WTC11 (cell line): ENCODE measurements at regions of chr3 and their contacts with region 1.

Region 1: DNA sequence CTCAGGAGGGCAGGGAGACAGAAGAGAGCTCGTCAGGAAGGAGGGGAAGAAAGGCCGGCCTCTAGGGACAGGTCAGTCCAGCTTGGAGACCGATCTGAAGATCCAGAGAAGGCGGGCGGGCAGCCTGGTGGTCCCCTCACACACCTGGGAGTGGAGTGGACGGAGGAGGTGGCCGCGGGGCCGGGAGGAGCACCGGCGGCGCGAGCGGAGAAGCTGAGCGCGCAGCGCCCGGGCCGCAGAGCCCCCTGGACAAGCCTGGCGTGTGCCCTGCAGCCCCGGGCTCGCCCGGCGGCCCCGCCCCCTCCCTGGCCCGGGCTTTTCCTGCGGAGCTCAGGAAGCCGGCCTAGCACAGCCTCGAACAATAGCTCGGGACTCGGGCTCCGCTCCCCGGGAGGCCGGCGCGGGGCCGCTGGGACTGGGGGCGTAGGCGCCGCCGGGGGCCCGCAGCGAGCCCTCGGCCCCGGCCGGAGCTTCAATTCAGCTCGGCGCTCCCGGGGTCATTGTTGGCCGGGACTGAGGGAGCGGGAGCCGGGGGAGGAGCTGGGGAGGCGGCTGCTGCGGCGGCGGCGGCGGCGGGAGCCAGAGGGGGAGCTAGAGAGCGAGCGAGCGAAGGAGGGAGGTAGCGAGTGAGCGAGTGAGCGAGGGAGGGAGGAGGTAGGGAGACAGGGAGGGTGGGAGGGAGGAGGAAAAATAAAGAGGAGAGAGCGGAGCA is 40.9 kb upstream of the ROPN1 start:
- DNase-seq: peak; percentile 93
- ATAC-seq: peak; percentile 85
- H3K4me3 Mint-ChIP-seq: peak overlapping the region; percentile 90
- H3K27ac Mint-ChIP-seq: 0 out of 2 replicates have a peak overlapping the region, but pooled peaks have one; percentile 10
- H3K4me1 Mint-ChIP-seq: peaks cover 13% of the 10 kb centered on the region
- H3K27me3 Mint-ChIP-seq: peaks cover 27% of the 10 kb centered on the region
- CTCF ChIP-seq: peak; percentile 64

Region 2: DNA sequence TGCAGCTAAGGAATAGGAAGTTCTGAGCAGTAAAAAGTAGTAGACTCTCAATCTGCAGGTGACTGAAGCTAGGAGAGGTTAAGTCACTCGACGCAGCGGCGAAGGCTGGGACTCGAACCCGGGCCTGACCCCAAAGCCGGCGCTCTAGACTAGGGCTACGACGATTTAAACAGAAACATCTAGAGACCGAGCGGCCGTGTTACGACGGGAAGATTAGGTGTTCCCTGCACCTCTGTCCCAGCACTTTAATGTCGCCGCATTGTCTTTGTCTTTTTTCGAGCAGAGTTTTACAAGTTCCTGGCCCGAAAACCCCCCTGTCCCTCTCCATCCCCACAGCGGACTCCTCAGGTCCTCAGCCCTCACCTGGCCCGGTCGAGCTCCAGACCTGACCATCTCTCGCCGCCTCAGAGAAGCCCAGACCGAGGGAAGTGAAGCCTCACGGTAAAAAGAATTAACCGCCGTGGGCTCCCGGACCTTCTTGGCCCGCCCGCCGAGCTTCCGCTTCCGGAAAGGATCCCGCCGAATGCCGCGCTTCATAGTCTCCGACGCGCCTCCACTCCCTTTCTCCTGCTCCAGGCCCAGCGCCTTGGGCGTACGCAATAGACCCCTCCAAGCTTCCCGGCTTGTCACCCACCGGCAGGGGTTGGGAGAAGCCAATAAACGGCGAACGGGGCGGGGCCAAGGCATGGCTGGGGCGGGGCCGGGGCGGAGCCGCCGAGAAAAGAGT is 71.9 kb before region 1 on chr3 and contains the start of gene CCDC14:
- CTCF ChIA-PET with region 1: interaction called, 3 read pairs
- POLR2A ChIA-PET with region 1: interaction called, 10 read pairs
- DNase-seq: peak; percentile 98
- ATAC-seq: peak; percentile 100
- H3K4me3 Mint-ChIP-seq: peak within 1 kb of the TSS; percentile 93
- H3K27ac Mint-ChIP-seq: peak within 1 kb of the TSS; percentile 92
- H3K4me1 Mint-ChIP-seq: peaks cover 16% of the 10 kb centered on the region
- H3K27me3 Mint-ChIP-seq: peaks cover 38% of the 10 kb centered on the region
- CTCF ChIP-seq: no peak
- total RNA-seq, gene CCDC14: 52.4 to 67.0 TPM (median 64.1 TPM) in 3 replicates

Region 3: GRCh38 chr3:124057420-124057819 is 24.6 kb after region 1 on chr3:
- CTCF ChIA-PET with region 1: interaction called, 28 read pairs
- POLR2A ChIA-PET with region 1: interaction called, 3 read pairs
- DNase-seq: no peak
- ATAC-seq: no peak
- H3K4me3 Mint-ChIP-seq: no peak overlapping the region
- H3K27ac Mint-ChIP-seq: no peak overlapping the region
- H3K4me1 Mint-ChIP-seq: peaks cover 6% of the 10 kb centered on the region
- H3K27me3 Mint-ChIP-seq: peaks cover 7% of the 10 kb centered on the region
- CTCF ChIP-seq: no peak

Region 4: DNA sequence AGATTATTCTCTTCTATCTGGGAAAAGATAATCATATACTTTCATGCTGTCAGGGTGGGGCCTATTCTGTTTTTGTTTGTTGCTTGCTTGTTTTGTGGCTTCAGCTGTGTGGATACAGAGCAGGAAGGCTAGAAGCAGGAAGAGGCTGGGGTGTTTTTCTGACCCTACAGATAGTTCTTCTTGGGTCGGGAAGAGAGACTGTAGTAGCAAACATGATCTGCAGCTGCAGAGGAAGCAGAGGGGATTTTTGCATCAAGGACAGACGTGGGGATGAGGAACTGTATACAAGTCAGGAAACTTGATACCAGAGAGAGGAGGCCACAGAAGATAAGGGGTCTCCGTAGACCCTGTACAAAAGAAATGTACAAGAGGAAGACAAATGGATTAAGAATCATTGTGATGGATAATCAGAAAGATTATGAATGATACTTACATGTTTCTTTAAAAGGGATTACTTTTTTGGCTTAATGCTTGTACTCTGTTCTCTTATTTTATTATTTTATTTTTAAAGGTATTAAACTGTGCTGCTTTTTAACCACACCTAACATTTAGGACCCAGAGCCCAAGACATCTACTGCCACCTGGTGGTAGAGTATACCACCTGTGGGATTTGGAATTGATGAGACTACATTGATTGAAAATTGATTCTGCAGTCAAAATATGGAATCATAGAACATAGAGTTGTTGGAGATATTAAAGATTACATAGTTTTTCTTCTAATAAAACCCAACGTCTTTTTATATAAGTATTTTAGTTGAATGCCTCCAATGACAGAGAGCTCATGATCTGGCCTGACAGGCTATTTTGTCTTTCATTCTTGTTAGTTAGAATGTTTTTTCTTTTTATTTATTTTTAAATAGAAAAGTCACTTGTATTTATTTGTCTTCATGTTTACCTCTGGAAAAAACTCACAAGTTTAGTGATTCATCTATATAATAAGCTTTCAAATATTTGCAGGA is 46.4 kb after region 1 on chr3:
- CTCF ChIA-PET with region 1: interaction called, 30 read pairs
- POLR2A ChIA-PET with region 1: no interaction called
- DNase-seq: no peak
- ATAC-seq: 0 out of 2 replicates have a peak, but pooled peaks have one; percentile 43
- H3K4me3 Mint-ChIP-seq: no peak overlapping the region
- H3K27ac Mint-ChIP-seq: no peak overlapping the region
- H3K4me1 Mint-ChIP-seq: peaks cover 20% of the 10 kb centered on the region
- H3K27me3 Mint-ChIP-seq: no peaks in the 10 kb centered on the region
- CTCF ChIP-seq: peak; percentile 39; the same call in 1 of the 2 replicates

Region 5: GRCh38 chr3:124246949-124247348 is 214.1 kb after region 1 on chr3:
- CTCF ChIA-PET with region 1: interaction called, 15 read pairs
- POLR2A ChIA-PET with region 1: no interaction called
- DNase-seq: peak; percentile 21
- ATAC-seq: peak; percentile 69
- H3K4me3 Mint-ChIP-seq: no peak overlapping the region
- H3K27ac Mint-ChIP-seq: no peak overlapping the region
- H3K4me1 Mint-ChIP-seq: peaks cover 12% of the 10 kb centered on the region
- H3K27me3 Mint-ChIP-seq: no peaks in the 10 kb centered on the region; the same call in 1 of the 2 replicates
- CTCF ChIP-seq: no peak

Region 6: DNA sequence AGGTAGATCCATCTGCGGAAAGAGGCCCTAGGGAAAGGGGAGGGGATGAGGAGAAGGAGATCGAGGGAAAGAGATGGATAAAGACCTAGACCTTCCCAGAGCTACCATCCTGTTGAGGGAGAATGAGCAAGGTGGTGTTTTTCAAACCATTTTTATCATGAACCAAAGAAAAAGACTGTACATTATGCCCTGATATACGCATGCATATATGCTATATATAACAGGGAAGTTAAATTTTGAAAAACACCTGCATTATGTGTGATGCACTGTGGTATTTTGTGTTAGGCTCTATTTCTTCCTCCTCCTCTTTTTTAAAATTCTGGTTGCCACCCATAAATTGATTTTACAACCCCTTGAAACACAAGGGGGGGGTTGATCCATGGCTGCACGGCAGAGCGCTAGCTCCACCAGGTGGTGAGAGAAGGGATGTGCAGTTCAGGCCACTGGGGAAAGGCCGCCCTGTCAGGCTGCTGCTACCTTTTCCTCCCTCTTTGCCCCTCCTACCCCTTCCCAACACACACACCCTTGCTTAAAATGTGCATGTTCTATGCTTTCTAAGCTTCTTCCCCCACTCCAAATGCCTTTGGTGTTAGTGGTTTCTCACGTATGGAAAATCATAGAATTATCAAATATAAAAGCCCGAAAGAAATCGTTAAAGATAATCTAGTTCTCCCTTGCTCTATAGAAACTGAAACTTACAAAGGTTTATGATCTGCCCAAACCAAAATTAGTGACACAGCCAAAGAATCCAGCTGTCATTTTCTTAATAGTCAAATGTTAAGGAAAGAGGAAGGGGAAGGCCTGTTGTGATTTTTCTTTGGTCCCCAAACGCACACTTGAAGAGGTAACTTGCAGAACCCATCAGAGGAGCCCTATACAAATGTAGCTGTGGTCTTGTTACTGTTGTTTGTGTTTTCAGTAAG is 435.4 kb after region 1 on chr3:
- CTCF ChIA-PET with region 1: interaction called, 11 read pairs
- POLR2A ChIA-PET with region 1: no interaction called
- DNase-seq: peak; percentile 75
- ATAC-seq: peak; percentile 99
- H3K4me3 Mint-ChIP-seq: no peak overlapping the region
- H3K27ac Mint-ChIP-seq: no peak overlapping the region
- H3K4me1 Mint-ChIP-seq: peaks cover 6% of the 10 kb centered on the region
- H3K27me3 Mint-ChIP-seq: no peaks in the 10 kb centered on the region
- CTCF ChIP-seq: peak; percentile 95